ENCODE measurements at regions of chr6 and their contacts with region 1.

Region 1: GRCh38 chr6:116648156-116648555 is 20.4 kb downstream of the ZUP1 start:
- DNase-seq: no peak
- H3K4me3 ChIP-seq: no peak overlapping the region
- H3K27ac ChIP-seq: no peak overlapping the region
- H3K4me1 ChIP-seq: no peaks in the 10 kb centered on the region
- H3K27me3 ChIP-seq: no peaks in the 10 kb centered on the region
- CTCF ChIP-seq: no peak

Region 2: DNA sequence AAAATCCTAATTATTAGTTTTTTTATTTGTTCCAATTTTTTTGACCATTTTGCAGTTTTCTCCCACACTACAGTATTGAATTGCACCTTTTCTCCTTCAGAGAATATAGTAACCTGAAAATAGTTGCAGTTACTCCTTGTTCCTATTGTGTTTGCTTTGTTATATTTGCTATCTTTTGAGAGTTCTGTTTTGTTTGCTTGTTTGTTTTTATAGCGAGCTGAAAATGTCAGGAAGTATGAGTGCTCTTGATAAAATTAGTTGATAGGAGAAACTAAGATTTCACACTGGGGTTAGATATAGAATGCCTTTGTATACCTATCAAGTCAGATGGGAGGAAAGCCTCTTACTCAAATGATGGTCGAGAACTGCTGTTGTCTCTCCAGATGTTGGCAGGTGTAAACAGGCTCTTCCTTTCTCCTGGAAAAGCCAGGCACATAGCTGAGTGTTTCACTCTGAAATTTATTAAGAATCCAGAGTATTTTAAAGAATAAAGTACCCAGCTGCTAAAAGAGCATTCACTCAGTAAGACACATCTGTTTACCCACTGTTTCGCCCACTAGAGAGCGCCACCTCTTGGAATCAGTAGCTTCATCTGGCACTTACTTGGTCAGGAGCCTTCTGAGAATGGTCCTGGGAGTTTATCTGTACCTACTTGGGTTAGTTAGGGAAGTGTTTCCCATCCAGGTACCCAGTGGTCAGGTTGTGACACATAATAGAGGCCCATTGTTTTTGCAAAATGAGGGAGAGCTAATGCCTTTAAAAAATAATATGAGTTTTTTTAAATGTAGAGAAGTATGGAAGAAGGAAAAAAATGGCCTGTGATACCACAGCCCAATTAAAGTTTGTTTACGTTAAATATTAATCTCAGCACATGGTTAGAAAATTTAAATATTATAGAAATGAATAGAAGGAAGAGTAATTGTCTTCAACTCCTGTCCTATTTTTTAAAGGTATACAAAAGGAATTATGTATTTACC is 536.3 kb before region 1 on chr6:
- CTCF ChIA-PET with region 1: no interaction called
- POLR2A ChIA-PET with region 1: no interaction called
- intact Hi-C with region 1: loop called (anchors 10 kb)
- DNase-seq: peak in 1 of 2 experiments; percentile 28
- H3K4me3 ChIP-seq: no peak overlapping the region
- H3K27ac ChIP-seq: no peak overlapping the region
- H3K4me1 ChIP-seq: no peaks in the 10 kb centered on the region
- H3K27me3 ChIP-seq: no peaks in the 10 kb centered on the region
- CTCF ChIP-seq: peak; percentile 77

Region 3: DNA sequence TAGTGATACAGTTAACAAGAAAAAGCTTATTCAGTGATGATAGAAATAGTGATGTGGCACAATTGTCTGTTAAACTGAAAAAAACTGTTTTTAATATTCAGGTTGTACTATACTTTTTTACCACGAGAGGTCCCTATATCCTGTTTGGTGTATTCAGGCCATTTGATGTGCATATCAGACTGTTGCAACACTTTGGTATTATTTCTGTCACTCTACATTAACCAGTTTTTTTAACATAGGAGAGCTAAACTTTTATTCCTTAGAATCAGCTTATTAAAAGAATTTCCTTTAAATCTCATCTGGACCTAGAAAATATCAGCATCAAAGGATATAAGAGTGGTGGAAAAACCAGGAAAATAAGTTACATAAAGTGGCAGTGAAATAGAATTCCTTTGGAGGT is 431.1 kb before region 1 on chr6:
- CTCF ChIA-PET with region 1: no interaction called
- POLR2A ChIA-PET with region 1: no interaction called
- intact Hi-C with region 1: loop called (anchors 5 kb)
- DNase-seq: peak in 1 of 2 experiments; percentile 53
- H3K4me3 ChIP-seq: no peak overlapping the region
- H3K27ac ChIP-seq: peak overlapping the region; percentile 32; the same call in 1 of the 2 replicates
- H3K4me1 ChIP-seq: no peaks in the 10 kb centered on the region
- H3K27me3 ChIP-seq: no peaks in the 10 kb centered on the region
- CTCF ChIP-seq: peak; percentile 77

Region 4: GRCh38 chr6:116268589-116269293 is 379.4 kb before region 1 on chr6:
- CTCF ChIA-PET with region 1: no interaction called
- POLR2A ChIA-PET with region 1: no interaction called
- intact Hi-C with region 1: loop called (anchors 1 kb)
- DNase-seq: peak in 1 of 2 experiments; percentile 83
- H3K4me3 ChIP-seq: no peak overlapping the region
- H3K27ac ChIP-seq: no peak overlapping the region
- H3K4me1 ChIP-seq: peaks cover 6% of the 10 kb centered on the region; the same call in 1 of the 2 replicates
- H3K27me3 ChIP-seq: no peaks in the 10 kb centered on the region
- CTCF ChIP-seq: peak; percentile 98

Region 5: DNA sequence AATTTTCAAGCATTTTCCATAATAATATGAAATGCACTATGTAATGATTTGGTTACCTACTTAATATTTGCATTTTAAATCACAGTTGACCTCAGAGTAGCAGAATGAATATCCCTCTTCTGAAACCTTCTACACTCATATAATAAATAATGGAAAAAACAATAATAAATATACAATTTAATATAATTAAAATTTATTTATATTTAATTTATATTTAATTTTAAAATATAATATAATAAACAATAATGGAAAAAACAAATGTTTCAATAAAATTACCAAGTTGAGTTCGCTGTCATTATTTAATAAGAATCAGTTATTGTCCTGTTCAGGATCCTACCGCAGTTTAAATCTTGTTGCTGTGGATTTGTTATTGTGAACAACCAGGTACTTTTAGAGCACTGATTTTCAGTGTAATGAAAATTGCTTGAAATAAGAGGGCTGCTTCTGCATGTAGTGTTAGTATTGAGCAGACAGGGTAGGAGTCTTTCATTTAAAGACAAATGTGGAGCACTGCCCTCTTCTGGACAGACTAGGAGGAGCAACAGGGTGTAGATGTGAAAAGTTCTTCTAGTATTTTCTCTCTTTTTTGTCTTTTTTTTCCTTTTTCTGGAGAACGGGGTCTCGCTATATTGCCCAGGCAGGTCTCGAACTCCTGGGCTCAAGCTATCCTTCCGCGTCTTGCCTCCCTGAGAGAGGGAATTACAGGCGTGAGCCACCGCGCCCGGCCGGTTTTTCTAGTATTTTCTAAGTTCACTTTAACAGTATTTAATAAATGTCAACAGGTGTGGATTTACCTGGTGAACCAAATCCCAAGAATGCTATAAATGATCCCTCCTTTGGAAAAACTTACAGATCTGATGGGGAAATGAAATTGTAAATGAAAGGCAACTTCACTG is 116.2 kb before region 1 on chr6:
- CTCF ChIA-PET with region 1: no interaction called
- POLR2A ChIA-PET with region 1: no interaction called
- intact Hi-C with region 1: loop called (anchors 1 kb)
- DNase-seq: peak; percentile 47 to 54
- H3K4me3 ChIP-seq: no peak overlapping the region
- H3K27ac ChIP-seq: no peak overlapping the region
- H3K4me1 ChIP-seq: no peaks in the 10 kb centered on the region; the same call in 1 of the 2 replicates
- H3K27me3 ChIP-seq: no peaks in the 10 kb centered on the region
- CTCF ChIP-seq: peak; percentile 91

Region 6: GRCh38 chr6:116764961-116765851 is 117.0 kb after region 1 on chr6 and contains the start of gene FAM162B:
- CTCF ChIA-PET with region 1: no interaction called
- POLR2A ChIA-PET with region 1: no interaction called
- intact Hi-C with region 1: no loop called
- DNase-seq: no peak
- H3K4me3 ChIP-seq: no peak within 1 kb of the TSS
- H3K27ac ChIP-seq: no peak within 1 kb of the TSS
- H3K4me1 ChIP-seq: no peaks in the 10 kb centered on the region
- H3K27me3 ChIP-seq: no peaks in the 10 kb centered on the region
- CTCF ChIP-seq: no peak
- total RNA-seq, gene FAM162B: not detected in 2 replicates

Measured in PC-9 (cell line).